ENCODE measurements at regions of chr2 and their contacts with region 1.

Region 1: DNA sequence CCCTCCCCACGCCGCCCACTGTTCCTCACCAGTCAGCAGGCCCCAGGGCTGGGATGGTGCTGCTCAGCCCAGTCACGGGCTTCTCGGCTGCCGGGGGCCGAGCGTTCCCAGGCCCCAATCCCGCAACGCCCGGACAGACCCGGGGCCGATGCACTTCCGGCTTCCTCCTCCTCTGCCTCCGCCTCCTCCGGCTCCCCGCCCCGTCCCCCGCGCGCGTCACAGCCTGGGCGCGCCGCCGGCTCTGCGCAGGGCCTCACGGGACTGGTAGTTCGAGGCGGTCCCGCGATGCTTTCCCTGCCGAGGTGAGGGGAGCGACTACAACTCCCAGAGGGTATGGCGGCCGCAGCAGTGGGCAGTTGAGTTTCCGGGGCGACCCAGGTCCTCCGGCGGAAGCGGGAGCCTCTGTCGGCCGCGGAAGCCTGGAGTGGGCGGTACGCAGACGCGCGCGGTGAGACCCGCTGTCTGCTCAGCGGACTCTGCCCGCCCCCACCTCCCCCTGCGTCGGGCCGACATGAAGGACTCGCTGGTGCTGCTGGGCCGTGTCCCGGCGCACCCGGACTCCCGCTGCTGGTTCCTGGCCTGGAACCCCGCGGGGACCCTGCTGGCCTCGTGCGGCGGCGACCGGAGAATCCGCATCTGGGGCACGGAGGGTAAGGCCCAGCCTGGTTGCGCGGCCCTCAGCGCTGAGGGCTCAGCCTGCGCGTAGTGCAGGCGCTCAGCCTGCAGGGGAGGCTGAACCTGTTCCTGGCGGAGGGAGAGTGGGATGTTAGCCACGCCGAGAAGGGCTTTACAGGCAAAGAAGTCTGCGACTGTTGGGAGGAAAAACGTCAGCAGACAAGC is at the starts of genes CIAO1 and TMEM127:
- DNase-seq: peak; percentile 97 to 100 (median 98)
- ATAC-seq: peak; percentile 98
- H3K4me3 ChIP-seq: peak within 1 kb of the TSS; percentile 91 to 99
- H3K27ac ChIP-seq: peak within 1 kb of the TSS; percentile 80 to 93
- H3K4me1 ChIP-seq: peaks cover 21 to 56% of the 10 kb centered on the region in 2 donors
- H3K27me3 ChIP-seq: no peaks in the 10 kb centered on the region
- CTCF ChIP-seq: peak in 1 of 2 donors; percentile 50
- polyA plus RNA-seq, gene CIAO1: 60.7 to 72.8 (median 63.2) TPM
- polyA plus RNA-seq, gene TMEM127: 29.1 to 36.1 (median 33.7) TPM

Region 2: GRCh38 chr2:96065381-96065930 is 200.6 kb before region 1 on chr2:
- intact Hi-C with region 1: no loop called
- DNase-seq: peak in 1 of 4 donors; percentile 80
- ATAC-seq: no peak
- H3K4me3 ChIP-seq: no peak overlapping the region
- H3K27ac ChIP-seq: no peak overlapping the region
- H3K4me1 ChIP-seq: peaks cover 0 to 4% of the 10 kb centered on the region in 2 donors
- H3K27me3 ChIP-seq: no peaks in the 10 kb centered on the region
- CTCF ChIP-seq: no peak

Region 3: GRCh38 chr2:96204836-96205624 is 61.0 kb before region 1 on chr2:
- intact Hi-C with region 1: loop called in 1 of 2 experiments (anchors 5 kb)
- DNase-seq: no peak
- ATAC-seq: no peak
- H3K4me3 ChIP-seq: no peak overlapping the region
- H3K27ac ChIP-seq: peak overlapping the region; percentile 64 to 65
- H3K4me1 ChIP-seq: peaks cover 51 to 86% of the 10 kb centered on the region in 2 donors
- H3K27me3 ChIP-seq: no peaks in the 10 kb centered on the region
- CTCF ChIP-seq: no peak

Measured in left lung (tissue), 14 donors.